ENCODE measurements at regions of chr2 and their contacts with region 1.

Region 1: GRCh38 chr2:218876562-218877219 is 4.0 kb upstream of the WNT10A start:
- DNase-seq: peak in 1 of 2 donors; percentile 57
- ATAC-seq: peak; percentile 30 to 68 (median 50)
- H3K4me3 ChIP-seq: no peak overlapping the region
- H3K27ac ChIP-seq: no peak overlapping the region
- H3K4me1 ChIP-seq: peaks cover 0 to 26% (median 19%) of the 10 kb centered on the region in 9 donors
- H3K27me3 ChIP-seq: peaks cover 39 to 100% (median 100%) of the 10 kb centered on the region in 7 donors
- CTCF ChIP-seq: peak; percentile 82 to 96 (median 93)

Region 2: DNA sequence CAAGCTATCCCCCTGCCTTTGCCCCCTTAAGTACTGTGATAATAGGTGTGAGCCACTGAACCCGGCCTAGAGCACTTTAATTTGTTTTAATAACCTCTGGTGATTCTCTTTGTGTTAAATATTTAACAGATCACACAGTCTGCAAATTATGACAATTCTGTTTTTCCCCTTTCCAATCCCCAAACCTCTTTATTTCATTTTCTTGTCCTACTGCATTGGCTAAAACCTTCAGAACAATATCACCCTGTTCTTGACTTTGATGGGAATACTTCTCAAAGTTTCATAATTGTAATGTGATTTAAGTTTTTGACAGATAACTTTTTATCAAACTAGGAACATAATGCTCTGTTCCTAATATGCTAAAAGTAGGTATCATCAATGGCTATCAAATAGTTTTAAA is 353.0 kb before region 1 on chr2:
- intact Hi-C with region 1: no loop called
- DNase-seq: no peak
- ATAC-seq: no peak
- H3K4me3 ChIP-seq: no peak overlapping the region
- H3K27ac ChIP-seq: no peak overlapping the region
- H3K4me1 ChIP-seq: no peaks in the 10 kb centered on the region
- H3K27me3 ChIP-seq: no peaks in the 10 kb centered on the region
- CTCF ChIP-seq: no peak

Region 3: DNA sequence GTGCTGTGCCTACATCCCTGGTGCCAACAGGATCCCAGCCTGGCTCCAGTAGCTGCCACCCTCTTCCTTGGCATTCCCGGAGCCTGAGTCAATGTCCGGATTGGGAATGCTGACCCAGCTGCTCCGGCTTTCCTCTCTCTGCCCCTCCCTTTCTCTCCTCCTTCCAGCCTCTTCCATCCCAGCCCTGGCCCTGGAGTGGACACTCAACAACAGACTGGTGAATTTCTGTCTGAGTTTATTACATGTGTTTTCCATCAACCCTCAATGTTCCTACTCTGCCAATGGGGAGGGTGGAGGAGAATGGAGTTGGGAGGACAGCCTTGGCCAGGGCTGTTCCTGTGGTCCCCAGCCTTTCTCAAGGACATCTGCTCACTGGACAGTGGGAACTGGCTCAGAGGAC is 44.2 kb before region 1 on chr2:
- intact Hi-C with region 1: no loop called
- DNase-seq: peak; percentile 34 to 49
- ATAC-seq: peak; percentile 69 to 86 (median 78)
- H3K4me3 ChIP-seq: no peak overlapping the region
- H3K27ac ChIP-seq: peak overlapping the region in 9 of 10 donors; percentile 5 to 87 (median 67)
- H3K4me1 ChIP-seq: peaks cover 0 to 28% (median 13%) of the 10 kb centered on the region in 9 donors
- H3K27me3 ChIP-seq: peaks cover 0 to 65% (median 32%) of the 10 kb centered on the region in 7 donors
- CTCF ChIP-seq: no peak

Region 4: DNA sequence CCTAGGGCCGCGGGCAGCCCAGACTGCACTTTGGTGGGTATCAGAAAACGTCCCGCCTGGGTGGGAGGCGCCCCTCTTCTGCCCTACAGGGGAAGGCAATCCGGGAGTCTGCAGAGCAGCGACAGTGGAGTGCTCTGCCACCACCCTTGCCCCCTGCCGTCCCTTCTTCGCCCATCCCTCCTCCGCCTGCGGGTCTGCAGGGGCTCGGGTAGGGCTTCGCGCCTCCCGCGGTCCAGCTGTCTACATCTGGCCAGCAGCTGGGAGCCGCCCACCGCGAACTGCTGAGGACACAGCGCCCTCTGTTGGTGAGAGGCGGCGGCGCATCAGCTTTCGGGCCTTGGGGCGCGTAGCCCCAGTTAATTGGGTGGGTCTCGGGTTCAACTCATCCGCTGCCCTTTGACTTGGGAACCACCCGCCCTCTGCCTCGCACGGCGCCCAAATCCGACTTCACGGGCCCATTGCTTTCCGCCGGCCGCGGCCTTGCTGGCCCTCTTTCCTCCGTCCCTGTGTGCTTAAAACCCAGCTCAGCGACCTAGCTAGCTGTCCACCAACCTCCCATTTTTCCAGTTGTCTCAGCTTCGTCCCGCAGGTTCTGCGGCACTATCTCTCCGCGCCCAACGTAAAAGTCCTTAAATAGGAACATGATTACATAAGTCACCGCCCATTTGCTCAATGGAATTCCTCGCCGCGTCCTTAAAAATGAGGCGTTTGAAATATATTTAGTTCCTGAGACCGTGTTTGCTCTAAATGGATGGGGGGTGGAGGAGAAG is 21.6 kb after region 1 on chr2:
- intact Hi-C with region 1: loop called in 5 of 10 experiments (anchors 1 to 2 kb)
- DNase-seq: peak; percentile 47 to 80
- ATAC-seq: peak; percentile 80 to 93 (median 84)
- H3K4me3 ChIP-seq: peak overlapping the region in 7 of 10 donors; percentile 1 to 31 (median 15)
- H3K27ac ChIP-seq: no peak overlapping the region
- H3K4me1 ChIP-seq: peaks cover 4 to 36% (median 24%) of the 10 kb centered on the region in 9 donors
- H3K27me3 ChIP-seq: peaks cover 33 to 100% (median 99%) of the 10 kb centered on the region in 7 donors
- CTCF ChIP-seq: peak; percentile 78 to 98 (median 95)

Region 5: GRCh38 chr2:219168526-219168925 is 291.8 kb after region 1 on chr2:
- intact Hi-C with region 1: no loop called
- DNase-seq: no peak
- ATAC-seq: peak in 3 of 8 donors; percentile 39 to 43 (median 41)
- H3K4me3 ChIP-seq: no peak overlapping the region
- H3K27ac ChIP-seq: no peak overlapping the region
- H3K4me1 ChIP-seq: peaks cover 0 to 21% (median 10%) of the 10 kb centered on the region in 9 donors
- H3K27me3 ChIP-seq: no peaks in the 10 kb centered on the region
- CTCF ChIP-seq: no peak

Measured in heart right ventricle (tissue), 16 donors.